ENCODE measurements at regions of chr2 and their contacts with region 1.

Region 1: GRCh38 chr2:230746213-230746612 is 33.6 kb downstream of the CAB39 start:
- DNase-seq: no peak
- ATAC-seq: no peak
- H3K4me3 Mint-ChIP-seq: no peak overlapping the region
- H3K27ac Mint-ChIP-seq: no peak overlapping the region
- H3K4me1 Mint-ChIP-seq: peaks cover 37% of the 10 kb centered on the region
- H3K27me3 Mint-ChIP-seq: no peaks in the 10 kb centered on the region

Region 2: DNA sequence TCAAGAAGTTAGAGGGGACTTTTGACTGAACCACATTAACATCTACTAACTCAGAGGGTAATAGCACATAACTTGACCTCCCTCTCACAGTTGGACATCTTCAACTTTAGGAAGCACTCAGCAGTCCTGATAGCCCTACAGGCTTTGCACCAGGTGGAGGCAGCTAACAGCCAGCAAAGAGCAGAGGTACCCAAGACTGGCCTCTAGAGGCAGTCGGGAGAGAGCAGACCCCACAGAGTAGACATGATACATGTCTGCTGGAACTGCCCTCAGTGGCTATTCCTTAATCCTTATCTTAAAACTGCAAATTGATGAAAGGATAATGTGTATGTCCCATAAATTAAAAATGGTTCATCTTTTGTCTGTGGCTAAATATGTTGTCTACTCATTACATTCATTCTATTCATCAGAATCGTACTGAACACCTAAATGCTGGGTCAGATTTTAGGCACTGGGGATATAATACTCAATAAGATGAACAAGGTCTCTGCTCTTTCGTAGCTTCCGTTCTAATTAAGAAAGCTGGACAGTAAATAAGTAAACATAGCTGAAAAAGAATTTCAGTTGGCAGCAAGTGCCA is 16.2 kb after region 1 on chr2:
- CTCF ChIA-PET with region 1: interaction called, 10 read pairs
- POLR2A ChIA-PET with region 1: no interaction called
- DNase-seq: peak; percentile 51
- ATAC-seq: peak; percentile 88
- H3K4me3 Mint-ChIP-seq: no peak overlapping the region
- H3K27ac Mint-ChIP-seq: no peak overlapping the region
- H3K4me1 Mint-ChIP-seq: peaks cover 50% of the 10 kb centered on the region
- H3K27me3 Mint-ChIP-seq: no peaks in the 10 kb centered on the region

Measured in activated CD8-positive, alpha-beta T cell treated with anti-CD3 and anti-CD28 coated beads, Interleukin-2, amount 10 ng/mL, durations not matched to agents 7 days and 5 days (primary cell).